ENCODE measurements at regions of chr1 and their contacts with region 1.

Region 1: GRCh38 chr1:201408176-201408833 is 9.2 kb upstream of the LAD1 start:
- DNase-seq: peak; percentile 87
- H3K4me3 Mint-ChIP-seq: no peak overlapping the region
- H3K27ac Mint-ChIP-seq: no peak overlapping the region
- H3K4me1 Mint-ChIP-seq: no peaks in the 10 kb centered on the region
- H3K27me3 Mint-ChIP-seq: no peaks in the 10 kb centered on the region

Region 2: DNA sequence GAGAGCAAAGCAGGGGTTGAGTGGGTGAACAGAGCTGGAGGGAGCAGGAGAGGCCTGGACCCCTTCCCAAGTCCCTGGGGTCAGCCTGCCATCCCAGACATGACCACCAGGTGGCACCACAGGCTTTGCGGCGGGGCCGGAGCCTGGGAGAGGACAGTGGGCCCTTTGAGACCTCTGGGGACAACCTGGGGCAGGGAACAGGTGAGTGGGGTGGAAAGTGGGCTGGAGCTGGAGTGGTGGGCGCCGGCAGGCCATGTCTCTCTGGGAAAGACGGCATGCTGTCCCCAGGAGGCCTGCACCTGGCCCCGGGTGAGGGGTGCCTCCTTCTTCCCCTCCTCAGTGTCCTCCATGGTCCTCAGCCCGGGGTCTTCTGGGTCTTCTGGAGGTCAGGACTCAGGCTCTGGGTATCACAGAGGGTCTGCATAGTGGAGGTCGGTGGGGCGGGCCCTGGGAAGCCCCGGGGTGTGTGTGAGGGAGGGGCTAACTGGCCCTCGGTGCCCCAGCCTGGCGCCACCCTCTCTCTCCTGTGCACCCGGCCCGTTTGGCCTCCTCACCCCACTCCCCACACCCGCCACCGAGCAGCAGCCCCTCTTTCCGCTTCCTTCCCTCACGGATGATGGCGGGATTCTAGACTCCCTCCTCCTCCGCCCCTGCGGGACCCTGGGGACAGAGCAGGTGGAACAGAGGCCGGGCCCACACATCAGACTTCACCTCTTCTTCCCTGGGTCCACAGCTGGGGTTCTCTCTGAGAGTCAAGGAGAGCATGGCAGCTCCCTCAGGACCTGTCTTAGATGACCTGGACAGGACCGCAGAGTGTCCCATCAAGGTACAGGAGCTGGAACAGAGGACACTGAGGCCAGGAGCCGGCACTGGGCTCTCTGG is 153.4 kb before region 1 on chr1:
- CTCF ChIA-PET with region 1: interaction called, 6 read pairs
- intact Hi-C with region 1: loop called (anchors 1 kb)
- DNase-seq: peak; percentile 75
- H3K4me3 Mint-ChIP-seq: no peak overlapping the region
- H3K27ac Mint-ChIP-seq: no peak overlapping the region
- H3K4me1 Mint-ChIP-seq: no peaks in the 10 kb centered on the region
- H3K27me3 Mint-ChIP-seq: no peaks in the 10 kb centered on the region

Region 3: DNA sequence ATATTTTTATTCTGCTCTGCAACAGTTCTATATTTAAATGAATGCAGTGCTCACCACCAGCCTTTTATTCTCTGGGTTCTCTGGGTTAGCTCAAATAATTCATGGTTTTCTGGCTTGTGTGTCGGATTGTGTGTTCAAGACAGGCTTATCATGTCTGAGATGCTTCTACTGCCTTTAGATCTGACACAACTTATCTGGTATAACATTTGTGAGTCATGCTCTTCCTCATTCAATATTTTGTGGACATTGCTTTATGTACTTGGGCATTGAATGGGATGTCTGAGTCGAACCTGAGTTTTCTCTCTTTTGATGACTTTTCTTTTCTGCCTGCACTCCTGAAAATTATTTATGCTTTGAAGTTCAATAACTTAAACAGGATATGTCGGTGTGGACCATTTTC is 142.5 kb before region 1 on chr1:
- CTCF ChIA-PET with region 1: no interaction called
- intact Hi-C with region 1: no loop called
- DNase-seq: no peak
- H3K4me3 Mint-ChIP-seq: no peak overlapping the region
- H3K27ac Mint-ChIP-seq: no peak overlapping the region
- H3K4me1 Mint-ChIP-seq: no peaks in the 10 kb centered on the region
- H3K27me3 Mint-ChIP-seq: peaks cover 30% of the 10 kb centered on the region

Region 4: DNA sequence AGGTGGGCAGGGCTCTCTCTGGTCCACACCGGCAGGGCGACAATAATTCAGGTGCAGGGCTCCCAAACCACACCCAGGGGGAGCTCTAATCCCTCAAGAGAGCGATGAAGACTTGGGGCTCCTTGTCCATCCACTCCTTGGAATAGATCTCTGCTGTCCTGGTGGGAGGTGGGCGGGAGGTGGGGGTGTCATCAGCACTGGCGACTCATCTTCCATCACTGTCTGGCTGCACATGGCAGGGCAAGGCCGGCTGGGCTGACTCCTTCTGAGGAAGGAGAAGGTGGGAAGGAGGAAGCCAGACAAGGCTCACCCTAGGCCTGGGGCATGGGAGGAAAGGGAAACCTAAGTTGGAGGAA is 60.1 kb before region 1 on chr1:
- CTCF ChIA-PET with region 1: interaction called, 9 read pairs
- intact Hi-C with region 1: loop called (anchors 1 kb)
- DNase-seq: peak; percentile 52
- H3K4me3 Mint-ChIP-seq: no peak overlapping the region
- H3K27ac Mint-ChIP-seq: no peak overlapping the region
- H3K4me1 Mint-ChIP-seq: no peaks in the 10 kb centered on the region
- H3K27me3 Mint-ChIP-seq: peaks cover 25% of the 10 kb centered on the region

Region 5: GRCh38 chr1:201385299-201385891 is 22.9 kb before region 1 on chr1:
- CTCF ChIA-PET with region 1: interaction called, 8 read pairs
- intact Hi-C with region 1: loop called (anchors 1 kb)
- DNase-seq: peak; percentile 61
- H3K4me3 Mint-ChIP-seq: no peak overlapping the region
- H3K27ac Mint-ChIP-seq: no peak overlapping the region
- H3K4me1 Mint-ChIP-seq: no peaks in the 10 kb centered on the region
- H3K27me3 Mint-ChIP-seq: peaks cover 7% of the 10 kb centered on the region

Region 6: GRCh38 chr1:201436393-201436792 is 28.1 kb after region 1 on chr1:
- CTCF ChIA-PET with region 1: interaction called, 10 read pairs
- intact Hi-C with region 1: no loop called
- DNase-seq: no peak
- H3K4me3 Mint-ChIP-seq: no peak overlapping the region
- H3K27ac Mint-ChIP-seq: no peak overlapping the region
- H3K4me1 Mint-ChIP-seq: peaks cover 5% of the 10 kb centered on the region
- H3K27me3 Mint-ChIP-seq: peaks cover 6% of the 10 kb centered on the region

Measured in activated naive CD4-positive, alpha-beta T cell treated with anti-CD3 and anti-CD28 coated beads for 36 hours (primary cell).